PC-9 (cell line): ENCODE measurements at regions of chr12 and their contacts with region 1.

Region 1: DNA sequence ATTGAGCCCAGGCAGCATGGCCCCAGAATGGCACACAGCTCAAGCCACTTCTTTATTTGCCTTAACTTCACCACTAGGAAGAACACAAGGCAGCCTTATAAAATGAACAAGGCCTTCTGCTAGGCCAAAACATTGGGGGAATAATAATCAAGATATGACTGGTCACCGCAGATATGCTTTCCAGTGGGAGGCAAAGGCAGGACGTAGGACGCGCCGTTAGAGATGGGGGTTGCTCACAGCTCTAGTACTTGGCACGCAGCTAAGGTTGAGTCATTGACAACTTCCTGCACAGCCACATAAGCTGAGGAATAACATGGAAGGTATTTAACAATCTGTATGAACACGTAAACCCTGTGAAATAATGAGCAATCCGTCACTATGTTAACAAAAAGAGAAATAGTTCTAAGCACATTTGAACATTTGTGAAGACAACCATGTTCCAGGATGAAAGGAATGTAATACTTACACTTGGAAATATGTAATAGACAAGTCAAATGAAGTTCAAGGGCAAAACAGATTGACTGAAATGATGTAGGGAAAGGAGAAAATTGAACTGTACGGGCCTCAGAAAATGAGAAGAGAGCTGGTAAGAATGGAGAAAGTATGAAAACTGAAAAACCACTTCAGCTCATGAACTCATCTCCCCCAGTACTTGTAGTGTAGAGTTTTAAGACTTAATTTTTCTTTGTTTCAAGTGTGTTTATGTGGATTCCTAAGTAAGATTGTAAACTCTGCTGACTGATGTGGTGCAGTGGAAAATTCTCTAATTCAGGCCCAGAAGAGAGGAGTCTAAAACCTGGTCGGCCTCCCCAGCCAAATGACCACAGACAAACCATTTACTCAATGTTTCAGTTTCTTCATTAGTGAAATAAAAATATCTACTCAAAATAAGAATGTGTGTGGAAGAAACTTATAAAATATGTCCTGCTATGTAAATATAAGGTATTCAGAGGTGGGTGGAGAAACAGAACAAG is 59.3 kb upstream of the CCDC91 start:
- DNase-seq: peak; percentile 62 to 73
- H3K4me3 ChIP-seq: no peak overlapping the region
- H3K27ac ChIP-seq: peak overlapping the region; percentile 37; the same call in 1 of the 2 replicates
- H3K4me1 ChIP-seq: no peaks in the 10 kb centered on the region
- H3K27me3 ChIP-seq: no peaks in the 10 kb centered on the region
- CTCF ChIP-seq: no peak

Region 2: GRCh38 chr12:27840244-27840999 is 290.5 kb before region 1 on chr12:
- CTCF ChIA-PET with region 1: no interaction called
- POLR2A ChIA-PET with region 1: interaction called, 10 read pairs
- intact Hi-C with region 1: no loop called
- DNase-seq: no peak
- H3K4me3 ChIP-seq: no peak overlapping the region
- H3K27ac ChIP-seq: no peak overlapping the region
- H3K4me1 ChIP-seq: no peaks in the 10 kb centered on the region
- H3K27me3 ChIP-seq: no peaks in the 10 kb centered on the region
- CTCF ChIP-seq: peak; percentile 61

Region 3: DNA sequence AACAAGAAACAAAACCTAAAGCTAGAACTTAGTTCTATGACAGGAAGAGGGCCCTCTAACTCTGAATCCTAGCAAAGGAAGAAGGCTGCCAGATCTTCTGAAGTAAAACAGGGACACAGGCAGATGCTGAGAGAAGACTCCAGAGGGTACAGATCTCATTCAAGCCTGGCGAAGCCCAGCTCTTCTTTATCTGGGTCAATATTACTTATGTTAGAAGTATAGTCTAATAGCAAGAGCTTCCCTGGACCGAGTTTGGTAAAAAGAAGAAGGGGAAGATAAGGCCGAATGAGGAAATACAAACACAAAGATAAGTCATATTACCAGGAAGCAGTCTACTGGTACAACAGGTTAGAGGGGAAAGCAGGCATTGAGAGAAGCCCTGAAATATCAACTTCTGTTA is 20.6 kb before region 1 on chr12:
- CTCF ChIA-PET with region 1: no interaction called
- POLR2A ChIA-PET with region 1: no interaction called
- intact Hi-C with region 1: no loop called
- DNase-seq: no peak
- H3K4me3 ChIP-seq: no peak overlapping the region
- H3K27ac ChIP-seq: no peak overlapping the region
- H3K4me1 ChIP-seq: peaks cover 9% of the 10 kb centered on the region; the same call in 1 of the 2 replicates
- H3K27me3 ChIP-seq: no peaks in the 10 kb centered on the region
- CTCF ChIP-seq: no peak

Region 4: GRCh38 chr12:28497889-28498411 is 367.0 kb after region 1 on chr12:
- CTCF ChIA-PET with region 1: no interaction called
- POLR2A ChIA-PET with region 1: no interaction called
- intact Hi-C with region 1: no loop called
- DNase-seq: peak; percentile 4 to 81
- H3K4me3 ChIP-seq: 0 out of 2 replicates have a peak overlapping the region, but pooled peaks have one; percentile 3
- H3K27ac ChIP-seq: peak overlapping the region; percentile 63
- H3K4me1 ChIP-seq: peaks cover 17% of the 10 kb centered on the region
- H3K27me3 ChIP-seq: no peaks in the 10 kb centered on the region
- CTCF ChIP-seq: no peak